ENCODE measurements at regions of chr13 and their contacts with region 1.

Region 1: DNA sequence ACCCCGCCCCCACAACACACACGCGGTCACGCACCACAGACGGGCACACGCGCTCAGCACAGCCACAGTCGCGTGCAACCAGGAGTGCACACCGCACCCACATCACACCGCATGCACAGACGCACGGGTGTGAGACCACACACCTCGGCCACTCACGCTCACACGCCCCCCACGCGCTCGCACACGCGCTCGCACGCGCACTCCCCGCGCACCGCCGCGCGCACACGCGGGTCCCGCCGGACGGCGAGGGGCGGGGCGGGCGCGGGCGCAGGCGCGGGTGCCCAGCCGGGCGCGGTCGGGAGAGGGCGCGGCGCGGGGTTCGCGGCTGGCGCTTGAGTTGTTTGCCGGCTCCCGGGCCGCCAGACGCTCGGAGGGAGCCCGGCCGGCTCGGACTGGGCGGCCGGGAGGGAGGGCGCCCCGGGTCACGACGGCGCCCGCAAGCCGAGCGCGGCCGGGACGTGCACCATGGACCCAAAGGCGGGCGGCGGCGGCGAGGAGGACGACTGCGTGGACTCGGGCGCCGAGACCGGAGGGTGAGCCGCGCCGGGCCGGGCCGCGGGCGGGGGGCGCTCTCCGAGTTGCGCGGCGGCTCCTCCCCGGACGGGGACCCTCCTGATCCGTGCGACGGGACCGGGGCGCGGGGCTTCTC is at the start of gene FAM124A:
- DNase-seq: peak; percentile 89
- H3K4me3 ChIP-seq: peak within 1 kb of the TSS; percentile 70 to 79
- H3K27ac ChIP-seq: no peak within 1 kb of the TSS
- H3K4me1 ChIP-seq: peaks cover 0 to 20% of the 10 kb centered on the region in 2 experiments; a peak in 2 of 4 replicates
- H3K27me3 ChIP-seq: 0 out of 2 replicates have a peak, but pooled peaks cover 7% of the 10 kb centered on the region
- CTCF ChIP-seq: no peak
- EP300 ChIP-seq: no peak
- RAD21 ChIP-seq: peak; percentile 15; the same call in 1 of the 2 replicates
- polyA plus RNA-seq, gene FAM124A: 1.5 and 2.0 TPM in 2 replicates

Region 2: DNA sequence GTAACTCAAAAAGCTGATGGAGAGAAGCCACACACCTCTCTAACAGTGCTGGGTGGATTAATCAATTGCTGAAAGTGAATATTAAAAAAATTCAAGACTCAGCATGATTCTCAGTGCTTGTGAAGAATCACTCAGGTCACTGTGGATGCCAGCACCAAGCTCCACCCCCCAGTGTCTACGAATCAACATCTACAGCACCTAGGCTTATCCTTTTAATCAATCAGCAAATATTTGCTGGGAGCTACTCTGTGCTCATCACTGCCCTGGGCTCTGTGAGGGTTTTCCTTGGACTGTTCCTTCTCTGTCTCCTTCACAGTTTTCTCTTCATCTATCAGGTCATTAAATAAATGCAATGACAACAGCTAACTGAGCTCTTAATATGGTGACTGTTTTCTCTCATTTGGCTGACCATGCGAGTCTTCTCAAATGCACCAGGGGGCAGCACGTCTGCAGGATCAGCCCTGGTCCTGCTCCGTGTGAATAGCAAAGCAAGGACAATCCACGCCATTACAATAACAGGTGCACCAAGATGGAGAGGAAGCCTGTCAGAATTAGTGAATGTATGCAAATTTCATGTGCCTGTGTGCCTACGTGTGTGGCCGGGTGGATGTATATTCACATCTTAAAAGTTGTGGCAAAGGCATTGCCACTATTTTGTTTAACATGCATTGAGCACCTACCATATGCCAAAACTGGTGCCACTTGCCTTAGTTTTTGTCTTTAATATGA is 96.5 kb before region 1 on chr13:
- CTCF ChIA-PET with region 1: interaction called, 10 read pairs
- POLR2A ChIA-PET with region 1: interaction called, 5 read pairs
- DNase-seq: peak; percentile 73
- H3K4me3 ChIP-seq: no peak overlapping the region; a peak in 1 of 4 replicates
- H3K27ac ChIP-seq: no peak overlapping the region
- H3K4me1 ChIP-seq: no peaks in the 10 kb centered on the region
- H3K27me3 ChIP-seq: 0 out of 2 replicates have a peak, but pooled peaks cover 13% of the 10 kb centered on the region
- CTCF ChIP-seq: peak; percentile 80
- EP300 ChIP-seq: no peak
- RAD21 ChIP-seq: peak; percentile 93

Region 3: DNA sequence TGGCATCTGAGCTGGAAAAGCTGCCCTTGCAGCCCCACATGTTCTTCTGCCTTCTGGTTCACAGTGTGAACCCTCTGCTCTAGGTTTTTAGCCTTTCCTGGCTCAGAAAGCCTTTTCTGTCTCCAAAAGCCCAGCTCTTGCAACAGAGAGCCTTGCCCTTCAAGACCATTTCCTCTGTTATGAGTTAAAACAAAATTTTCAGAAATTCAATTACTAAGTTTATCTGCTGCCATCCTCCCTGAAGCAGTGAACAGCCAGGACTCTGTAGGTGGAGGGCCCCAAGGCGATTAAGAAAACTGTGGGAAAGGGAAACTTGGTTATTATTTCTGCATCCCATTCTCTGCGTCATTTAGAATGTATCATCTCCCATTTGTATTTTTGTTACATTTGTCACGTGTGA is 18.8 kb after region 1 on chr13:
- CTCF ChIA-PET with region 1: interaction called, 13 read pairs
- POLR2A ChIA-PET with region 1: no interaction called
- DNase-seq: no peak
- H3K4me3 ChIP-seq: no peak overlapping the region
- H3K27ac ChIP-seq: no peak overlapping the region
- H3K4me1 ChIP-seq: peaks cover 0 to 21% of the 10 kb centered on the region in 2 experiments; a peak in 2 of 4 replicates
- H3K27me3 ChIP-seq: no peaks in the 10 kb centered on the region
- CTCF ChIP-seq: no peak
- EP300 ChIP-seq: peak in 1 of 2 experiments; percentile 30; a peak in 1 of 4 replicates
- RAD21 ChIP-seq: no peak

Region 4: GRCh38 chr13:51246418-51247277 is 24.5 kb after region 1 on chr13:
- CTCF ChIA-PET with region 1: interaction called, 10 read pairs
- POLR2A ChIA-PET with region 1: interaction called, 8 read pairs
- DNase-seq: peak; percentile 80
- H3K4me3 ChIP-seq: peak overlapping the region in 1 of 2 experiments; percentile 19; a peak in 1 of 4 replicates
- H3K27ac ChIP-seq: peak overlapping the region; percentile 15 to 85; a peak in 3 of 4 replicates
- H3K4me1 ChIP-seq: peaks cover 0 to 26% of the 10 kb centered on the region in 2 experiments; a peak in 2 of 4 replicates
- H3K27me3 ChIP-seq: no peaks in the 10 kb centered on the region
- CTCF ChIP-seq: no peak
- EP300 ChIP-seq: no peak
- RAD21 ChIP-seq: no peak

Measured in SK-N-SH (cell line).